Activated CD4-positive, alpha-beta memory T cell treated with anti-CD3 and anti-CD28 coated beads for 36 hours (primary cell): ENCODE measurements at regions of chr4 and their contacts with region 1.

Region 1: GRCh38 chr4:105191621-105192210 is 45.0 kb downstream of the TET2 start:
- DNase-seq: no peak
- H3K4me3 Mint-ChIP-seq: no peak overlapping the region
- H3K27ac Mint-ChIP-seq: peak overlapping the region; percentile 83
- H3K4me1 Mint-ChIP-seq: peaks cover 87% of the 10 kb centered on the region
- H3K27me3 Mint-ChIP-seq: no peaks in the 10 kb centered on the region

Region 2: DNA sequence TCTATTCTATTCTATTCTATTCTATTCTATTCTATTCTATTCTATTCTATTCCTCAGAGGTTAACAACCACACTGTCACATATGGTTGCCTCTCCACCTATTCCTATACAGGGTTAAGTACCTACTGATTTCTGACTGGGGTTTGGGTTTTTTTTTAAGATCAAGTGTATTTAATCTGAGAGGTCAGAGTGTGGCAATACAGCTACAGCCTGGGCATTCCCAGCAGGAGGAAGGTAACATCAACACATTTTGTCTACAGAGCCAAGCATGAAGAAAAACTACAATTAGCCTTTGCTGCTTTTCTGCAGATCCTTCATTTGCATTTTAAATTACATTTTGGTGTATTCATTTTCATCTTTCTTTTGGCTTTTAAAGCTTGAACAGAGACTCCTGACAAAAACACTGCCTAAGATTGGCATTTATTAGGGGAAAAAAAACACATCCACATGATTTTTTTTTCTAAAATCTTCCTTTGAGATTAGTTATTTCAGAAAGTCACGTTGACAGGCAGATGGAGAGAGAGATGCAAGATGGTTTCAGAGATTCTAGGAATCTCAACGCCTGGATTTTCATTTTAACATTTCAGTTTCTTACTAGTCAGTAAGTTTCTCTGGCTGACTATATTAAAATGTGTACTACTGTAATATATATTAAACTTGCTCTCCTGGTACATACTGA is 301.0 kb before region 1 on chr4:
- CTCF ChIA-PET with region 1: no interaction called
- POLR2A ChIA-PET with region 1: no interaction called
- intact Hi-C with region 1: no loop called
- DNase-seq: no peak
- H3K4me3 Mint-ChIP-seq: no peak overlapping the region
- H3K27ac Mint-ChIP-seq: no peak overlapping the region
- H3K4me1 Mint-ChIP-seq: no peaks in the 10 kb centered on the region
- H3K27me3 Mint-ChIP-seq: no peaks in the 10 kb centered on the region

Region 3: DNA sequence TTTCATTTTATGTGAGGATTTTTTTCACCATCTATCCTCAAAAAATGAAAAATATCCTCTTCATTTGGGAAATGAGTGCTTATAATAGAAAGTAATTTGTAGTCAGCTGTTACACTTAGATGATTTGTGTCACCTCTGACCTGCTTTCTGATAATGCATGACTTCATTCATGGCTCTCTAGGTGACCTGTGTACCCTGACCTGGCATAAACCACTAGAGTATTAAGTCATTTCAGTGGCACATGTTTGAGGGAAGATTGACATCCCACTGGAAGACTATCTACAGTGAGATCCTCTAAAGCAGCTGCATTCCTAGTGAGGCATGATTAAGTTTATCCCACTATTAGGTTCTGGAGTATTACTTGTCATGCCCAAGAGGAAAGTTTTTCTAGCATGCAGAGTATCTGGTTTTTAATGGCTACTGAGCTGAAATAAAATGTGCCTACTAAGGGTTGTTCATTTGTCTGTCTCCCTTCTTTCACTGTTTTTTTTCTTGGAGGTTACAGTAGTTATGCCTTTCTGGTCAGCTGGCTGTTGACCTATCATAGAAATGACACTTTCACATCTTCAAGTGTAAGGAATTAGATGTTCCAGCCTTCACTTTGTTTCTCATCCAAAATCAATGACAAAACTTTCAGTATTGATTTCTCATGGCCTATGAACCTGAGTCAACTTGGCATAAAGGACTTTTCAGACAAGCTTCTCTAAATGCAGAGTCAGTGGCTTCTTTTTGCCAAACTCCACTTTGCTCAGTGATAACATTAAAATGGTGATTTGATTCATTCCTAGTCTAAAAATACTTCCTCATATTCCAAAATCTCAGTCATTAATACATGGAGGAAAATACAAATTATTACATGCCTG is 11.9 kb before region 1 on chr4:
- CTCF ChIA-PET with region 1: interaction called, 7 read pairs
- POLR2A ChIA-PET with region 1: no interaction called
- intact Hi-C with region 1: loop called (anchors 2 kb)
- DNase-seq: no peak
- H3K4me3 Mint-ChIP-seq: no peak overlapping the region
- H3K27ac Mint-ChIP-seq: no peak overlapping the region
- H3K4me1 Mint-ChIP-seq: peaks cover 44% of the 10 kb centered on the region
- H3K27me3 Mint-ChIP-seq: no peaks in the 10 kb centered on the region

Region 4: DNA sequence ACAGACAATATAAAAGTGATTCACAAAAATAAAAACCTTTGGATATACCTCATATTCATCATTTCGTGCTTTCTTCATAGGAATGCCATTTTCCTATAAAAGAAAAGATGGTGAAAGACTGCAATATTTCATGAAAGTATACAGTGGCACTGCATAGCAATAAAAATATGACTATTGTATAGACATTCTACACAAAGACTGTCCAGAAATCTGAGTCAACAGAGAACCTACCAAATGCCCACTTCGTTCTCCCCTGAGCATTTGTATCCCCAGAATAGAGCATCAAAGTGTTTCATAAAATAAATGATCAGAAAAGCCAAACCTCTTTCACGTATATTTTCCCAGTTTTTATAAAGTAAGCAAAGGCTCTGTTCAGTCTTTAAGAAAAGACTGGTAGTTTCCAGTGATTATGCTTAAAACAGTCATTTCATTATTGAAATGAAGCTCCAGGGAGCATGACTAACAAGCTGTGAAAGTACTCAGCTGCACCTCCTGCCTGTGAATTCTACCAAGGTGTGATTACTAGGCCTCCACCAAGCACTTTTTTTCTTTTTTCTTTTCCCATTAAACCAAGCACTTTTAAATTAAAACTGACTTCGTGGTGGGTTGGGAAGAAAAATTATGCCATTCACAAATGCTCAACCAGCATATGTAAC is 262.0 kb after region 1 on chr4:
- CTCF ChIA-PET with region 1: no interaction called
- POLR2A ChIA-PET with region 1: no interaction called
- intact Hi-C with region 1: loop called (anchors 5 kb)
- DNase-seq: peak; percentile 51
- H3K4me3 Mint-ChIP-seq: no peak overlapping the region
- H3K27ac Mint-ChIP-seq: peak overlapping the region; percentile 69
- H3K4me1 Mint-ChIP-seq: peaks cover 38% of the 10 kb centered on the region
- H3K27me3 Mint-ChIP-seq: no peaks in the 10 kb centered on the region